Posterior vena cava (tissue), 2 donors: ENCODE measurements at regions of chr9 and their contacts with region 1.

Region 1: GRCh38 chr9:122125158-122125508 is 32.0 kb upstream of the TTLL11 start:
- DNase-seq: peak; percentile 94

Region 2: GRCh38 chr9:121972501-121972981 is 152.6 kb before region 1 on chr9:
- intact Hi-C with region 1: no loop called
- DNase-seq: no peak

Region 3: DNA sequence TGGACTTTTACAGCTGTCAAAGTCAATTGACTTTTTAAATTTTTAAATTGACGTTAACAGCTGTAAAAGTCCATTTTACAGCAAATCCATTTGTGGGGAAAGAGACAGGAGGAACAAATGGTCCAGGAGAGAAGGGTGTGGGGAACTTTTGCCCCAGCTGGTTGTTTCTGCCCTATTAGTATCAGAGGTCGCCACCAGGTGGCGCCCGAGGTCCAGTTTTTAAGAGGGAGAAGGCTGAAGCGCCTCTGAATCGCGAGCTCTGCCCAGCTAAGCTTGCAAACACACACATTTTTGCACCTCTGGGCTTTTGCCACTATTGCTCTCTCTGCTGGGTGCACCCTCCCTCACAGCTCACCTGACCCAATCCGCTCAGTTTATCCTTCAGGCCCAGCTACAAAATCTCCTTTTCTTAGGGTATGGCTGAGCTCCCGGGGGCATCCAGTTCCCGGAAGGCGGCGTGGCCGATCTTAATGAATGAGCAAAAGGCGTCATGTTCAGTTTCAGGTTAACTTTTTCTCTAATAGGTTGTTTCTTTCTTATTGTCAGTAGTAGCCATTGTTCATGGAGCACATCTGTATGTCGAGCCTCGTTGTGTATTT is 25.8 kb before region 1 on chr9:
- intact Hi-C with region 1: loop called (anchors 1 to 2 kb)
- DNase-seq: peak; percentile 96

Region 4: GRCh38 chr9:122350638-122351355 is 225.7 kb after region 1 on chr9:
- intact Hi-C with region 1: loop called (anchors 1 to 2 kb)
- DNase-seq: peak; percentile 94

Region 5: DNA sequence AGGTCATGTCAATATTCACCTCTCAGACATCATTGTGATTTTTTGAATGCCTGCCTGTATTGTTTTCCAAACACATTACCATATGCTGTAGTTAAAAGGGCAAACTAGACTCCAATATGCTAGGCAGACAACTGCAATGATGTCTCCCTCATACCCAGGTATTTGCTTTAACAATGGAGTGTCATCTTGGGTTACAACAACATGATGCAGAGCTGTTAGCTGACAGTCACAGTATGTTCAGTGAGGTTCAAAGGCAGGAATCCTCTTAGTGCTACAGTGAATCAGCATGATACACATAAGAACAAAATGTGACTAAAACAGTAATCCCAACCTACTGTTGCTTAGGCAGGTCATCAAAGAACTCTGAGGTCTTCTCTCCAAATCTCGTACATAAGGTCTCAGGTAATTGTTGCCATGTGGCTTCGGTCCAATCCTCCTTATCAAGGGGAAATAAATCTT is 328.6 kb after region 1 on chr9:
- intact Hi-C with region 1: loop called in 1 of 2 experiments (anchors 10 kb)
- DNase-seq: no peak

Region 6: GRCh38 chr9:122464633-122465567 is 339.8 kb after region 1 on chr9:
- intact Hi-C with region 1: loop called in 1 of 2 experiments (anchors 10 kb)
- DNase-seq: no peak

Region 7: DNA sequence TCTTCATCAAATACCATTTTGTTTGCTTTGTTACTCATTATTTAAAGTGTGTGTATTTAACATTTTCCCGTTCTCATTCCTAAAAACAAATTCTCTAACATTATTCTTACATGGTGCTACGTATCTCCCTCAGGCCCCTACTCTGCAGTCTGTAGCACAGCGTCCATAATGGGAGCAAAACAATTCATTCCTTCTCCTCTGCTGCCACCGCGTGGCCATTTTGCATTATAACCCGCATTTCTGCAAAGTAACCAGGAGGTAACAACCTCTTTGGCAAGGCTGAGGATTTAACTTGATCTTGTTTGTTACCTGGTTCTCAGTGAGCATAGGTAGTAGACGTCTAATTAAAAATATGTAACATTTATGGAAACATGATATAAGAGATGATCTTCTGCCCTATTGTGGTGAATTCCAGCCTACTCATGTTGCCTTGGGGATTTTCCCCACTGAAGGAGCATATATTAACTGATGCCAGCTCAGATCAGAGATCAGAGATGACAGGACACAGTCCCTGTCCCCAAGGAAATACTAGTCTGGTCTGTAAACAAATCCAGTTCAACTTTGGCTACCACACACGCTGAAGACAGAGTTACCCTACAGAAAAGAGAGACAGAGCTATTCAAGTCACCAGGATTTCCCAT is 685.3 kb after region 1 on chr9:
- intact Hi-C with region 1: loop called in 1 of 2 experiments (anchors 10 kb)
- DNase-seq: peak; percentile 92